GM12878 (cell line): ENCODE measurements at regions of chr1 and their contacts with region 1.

Region 1: GRCh38 chr1:8702850-8703810 is 114.3 kb downstream of the RERE start:
- DNase-seq: no peak
- ATAC-seq: peak; percentile 75
- H3K4me3 ChIP-seq: peak overlapping the region; percentile 57
- H3K27ac ChIP-seq: peak overlapping the region; percentile 54
- H3K4me1 ChIP-seq: no peaks in the 10 kb centered on the region; the same call in 1 of the 2 replicates
- H3K27me3 ChIP-seq: no peaks in the 10 kb centered on the region
- CTCF ChIP-seq: peak; percentile 6 to 55 (median 17); a peak in 3 of 6 replicates
- EP300 ChIP-seq: no peak
- POLR2A ChIP-seq: peak; percentile 87
- RAD21 ChIP-seq: peak; percentile 29; the same call in 1 of the 2 replicates

Region 2: GRCh38 chr1:8643542-8644536 is 59.3 kb before region 1 on chr1:
- CTCF ChIA-PET with region 1: interaction called, 5 read pairs
- POLR2A ChIA-PET with region 1: interaction called, 3 read pairs
- RAD21 ChIA-PET with region 1: interaction called, 17 read pairs
- SMC1A ChIA-PET with region 1: interaction called, 16 read pairs
- in situ Hi-C with region 1: no loop called
- intact Hi-C with region 1: loop called (anchors 5 kb)
- DNase-seq: peak; percentile 94
- ATAC-seq: peak; percentile 95
- H3K4me3 ChIP-seq: no peak overlapping the region
- H3K27ac ChIP-seq: peak overlapping the region; percentile 75
- H3K4me1 ChIP-seq: peaks cover 43% of the 10 kb centered on the region
- H3K27me3 ChIP-seq: no peaks in the 10 kb centered on the region
- CTCF ChIP-seq: no peak
- EP300 ChIP-seq: peak; percentile 52 to 61; a peak in 1 of 4 replicates
- POLR2A ChIP-seq: no peak
- RAD21 ChIP-seq: 0 out of 2 replicates have a peak, but pooled peaks have one; percentile 27

Region 3: DNA sequence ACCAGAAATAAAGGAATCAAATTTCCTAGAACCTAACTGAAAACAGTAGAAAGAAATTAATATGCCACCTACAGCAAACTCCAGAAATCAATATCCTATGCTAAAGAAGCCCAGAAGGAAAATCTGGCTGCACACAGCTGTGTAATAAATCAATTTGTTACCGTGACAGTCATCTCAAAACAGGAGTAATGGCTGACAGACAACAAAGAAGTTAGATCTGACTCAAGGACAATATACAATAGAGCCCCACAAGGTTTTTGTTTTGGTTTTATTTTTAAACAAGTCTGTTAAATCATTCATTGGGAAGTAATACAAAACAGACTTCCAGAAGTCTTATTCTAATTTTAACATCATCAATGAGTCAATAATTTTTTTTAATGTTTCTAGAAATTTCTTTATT is 54.1 kb before region 1 on chr1:
- CTCF ChIA-PET with region 1: interaction called, 5 read pairs
- POLR2A ChIA-PET with region 1: interaction called, 3 read pairs
- RAD21 ChIA-PET with region 1: interaction called, 17 read pairs
- SMC1A ChIA-PET with region 1: interaction called, 16 read pairs
- in situ Hi-C with region 1: no loop called
- intact Hi-C with region 1: loop called (anchors 5 kb)
- DNase-seq: no peak
- ATAC-seq: peak; percentile 76
- H3K4me3 ChIP-seq: no peak overlapping the region
- H3K27ac ChIP-seq: 0 out of 2 replicates have a peak overlapping the region, but pooled peaks have one; percentile 39
- H3K4me1 ChIP-seq: peaks cover 67% of the 10 kb centered on the region
- H3K27me3 ChIP-seq: no peaks in the 10 kb centered on the region
- CTCF ChIP-seq: no peak
- EP300 ChIP-seq: peak in 1 of 2 experiments; percentile 84; a peak in 3 of 4 replicates
- POLR2A ChIP-seq: no peak
- RAD21 ChIP-seq: no peak

Region 4: DNA sequence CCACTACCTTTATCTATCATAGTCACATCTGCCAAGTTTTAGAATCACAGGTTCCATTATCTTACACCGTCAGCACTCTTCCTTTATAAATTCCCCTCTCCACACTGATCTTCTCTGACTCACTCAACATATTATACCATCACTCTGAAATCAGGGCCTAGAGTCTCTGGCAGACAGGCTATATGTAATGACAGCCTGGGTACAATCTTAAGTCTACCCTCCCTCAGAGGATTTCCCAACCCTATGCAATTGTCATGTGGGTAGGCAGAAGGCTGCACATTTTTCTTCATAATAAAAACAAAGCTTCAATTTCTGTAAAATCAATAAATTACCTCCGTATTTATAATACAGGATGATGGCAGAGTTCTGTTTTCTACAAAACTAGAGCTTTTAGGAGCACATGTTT is 23.7 kb before region 1 on chr1:
- CTCF ChIA-PET with region 1: interaction called, 7 read pairs
- POLR2A ChIA-PET with region 1: interaction called, 8 read pairs
- RAD21 ChIA-PET with region 1: interaction called, 21 read pairs
- SMC1A ChIA-PET with region 1: interaction called, 154 read pairs
- in situ Hi-C with region 1: no loop called
- intact Hi-C with region 1: no loop called
- DNase-seq: no peak
- ATAC-seq: peak; percentile 49
- H3K4me3 ChIP-seq: no peak overlapping the region
- H3K27ac ChIP-seq: 0 out of 2 replicates have a peak overlapping the region, but pooled peaks have one; percentile 2
- H3K4me1 ChIP-seq: peaks cover 13% of the 10 kb centered on the region
- H3K27me3 ChIP-seq: no peaks in the 10 kb centered on the region
- CTCF ChIP-seq: no peak
- EP300 ChIP-seq: no peak
- POLR2A ChIP-seq: no peak
- RAD21 ChIP-seq: no peak

Region 5: GRCh38 chr1:8687039-8687438 is 16.1 kb before region 1 on chr1:
- CTCF ChIA-PET with region 1: interaction called, 6 read pairs
- POLR2A ChIA-PET with region 1: interaction called, 17 read pairs
- RAD21 ChIA-PET with region 1: interaction called, 10 read pairs
- SMC1A ChIA-PET with region 1: interaction called, 154 read pairs
- in situ Hi-C with region 1: no loop called
- intact Hi-C with region 1: no loop called
- DNase-seq: no peak
- ATAC-seq: peak; percentile 72
- H3K4me3 ChIP-seq: no peak overlapping the region
- H3K27ac ChIP-seq: peak overlapping the region; percentile 5; the same call in 1 of the 2 replicates
- H3K4me1 ChIP-seq: peaks cover 23% of the 10 kb centered on the region
- H3K27me3 ChIP-seq: no peaks in the 10 kb centered on the region
- CTCF ChIP-seq: no peak
- EP300 ChIP-seq: no peak
- POLR2A ChIP-seq: no peak
- RAD21 ChIP-seq: no peak

Region 6: GRCh38 chr1:8718850-8719361 is 15.8 kb after region 1 on chr1:
- CTCF ChIA-PET with region 1: interaction called, 9 read pairs
- POLR2A ChIA-PET with region 1: interaction called, 6 read pairs
- RAD21 ChIA-PET with region 1: interaction called, 3 read pairs
- SMC1A ChIA-PET with region 1: interaction called, 27 read pairs
- in situ Hi-C with region 1: no loop called
- intact Hi-C with region 1: no loop called
- DNase-seq: no peak
- ATAC-seq: peak; percentile 58
- H3K4me3 ChIP-seq: no peak overlapping the region
- H3K27ac ChIP-seq: no peak overlapping the region
- H3K4me1 ChIP-seq: peaks cover 23% of the 10 kb centered on the region
- H3K27me3 ChIP-seq: no peaks in the 10 kb centered on the region
- CTCF ChIP-seq: peak; percentile 15 to 40 (median 22); a peak in 4 of 6 replicates
- EP300 ChIP-seq: no peak
- POLR2A ChIP-seq: no peak
- RAD21 ChIP-seq: peak; percentile 23; the same call in 1 of the 2 replicates

Region 7: DNA sequence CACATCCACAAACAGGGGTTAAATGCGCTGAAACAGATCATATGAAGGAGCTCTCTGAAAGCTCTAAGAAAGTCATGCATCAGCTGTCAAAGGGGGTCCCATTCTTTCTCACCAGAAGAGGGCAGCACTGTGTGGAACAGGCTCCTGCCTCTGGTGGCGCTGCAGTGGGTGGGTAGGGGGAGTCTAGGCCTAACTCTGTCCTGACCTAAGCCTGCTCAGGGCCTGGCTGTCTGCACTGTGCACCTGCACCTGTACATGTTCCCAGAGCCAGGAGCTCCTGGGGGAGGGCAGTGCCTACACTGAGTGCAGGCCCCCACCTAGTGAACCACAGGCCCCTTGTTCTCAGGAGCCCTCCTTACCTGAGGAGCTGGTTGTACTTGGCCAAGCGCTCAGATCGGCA is 159.4 kb after region 1 on chr1:
- CTCF ChIA-PET with region 1: no interaction called
- POLR2A ChIA-PET with region 1: no interaction called
- RAD21 ChIA-PET with region 1: no interaction called
- SMC1A ChIA-PET with region 1: no interaction called
- in situ Hi-C with region 1: no loop called
- intact Hi-C with region 1: no loop called
- DNase-seq: no peak
- ATAC-seq: peak; percentile 48
- H3K4me3 ChIP-seq: no peak overlapping the region
- H3K27ac ChIP-seq: no peak overlapping the region
- H3K4me1 ChIP-seq: no peaks in the 10 kb centered on the region
- H3K27me3 ChIP-seq: no peaks in the 10 kb centered on the region
- CTCF ChIP-seq: peak; percentile 19 to 58 (median 56)
- EP300 ChIP-seq: no peak
- POLR2A ChIP-seq: 0 out of 2 replicates have a peak, but pooled peaks have one; percentile 41
- RAD21 ChIP-seq: no peak